ENCODE measurements at regions of chr12 and their contacts with region 1.

Region 1: DNA sequence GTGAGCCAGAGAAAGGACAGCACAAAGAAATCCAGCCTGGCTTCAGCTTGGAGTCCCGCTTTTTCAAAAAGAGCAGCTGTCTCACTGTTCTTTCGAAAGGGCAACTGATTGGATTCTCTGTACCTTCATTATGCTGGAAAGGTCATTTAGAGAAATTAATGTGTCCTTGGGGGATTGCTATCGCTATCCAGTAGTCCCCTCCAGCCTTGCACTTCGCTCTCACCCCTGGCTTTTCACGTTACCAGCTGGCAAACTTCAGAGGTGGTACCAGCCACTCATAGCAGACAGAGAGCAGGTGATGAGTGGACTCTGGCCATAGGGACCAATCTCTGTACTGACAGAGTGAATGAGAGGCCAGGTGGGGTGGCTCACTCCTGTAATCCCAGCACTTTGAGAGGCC is 11.8 kb upstream of the NUAK1 start:
- DNase-seq: no peak
- H3K4me3 ChIP-seq: no peak overlapping the region
- H3K27ac ChIP-seq: no peak overlapping the region
- H3K4me1 ChIP-seq: peaks cover 0 to 21% (median 14%) of the 10 kb centered on the region in 4 donors
- H3K27me3 ChIP-seq: no peaks in the 10 kb centered on the region
- CTCF ChIP-seq: no peak

Region 2: DNA sequence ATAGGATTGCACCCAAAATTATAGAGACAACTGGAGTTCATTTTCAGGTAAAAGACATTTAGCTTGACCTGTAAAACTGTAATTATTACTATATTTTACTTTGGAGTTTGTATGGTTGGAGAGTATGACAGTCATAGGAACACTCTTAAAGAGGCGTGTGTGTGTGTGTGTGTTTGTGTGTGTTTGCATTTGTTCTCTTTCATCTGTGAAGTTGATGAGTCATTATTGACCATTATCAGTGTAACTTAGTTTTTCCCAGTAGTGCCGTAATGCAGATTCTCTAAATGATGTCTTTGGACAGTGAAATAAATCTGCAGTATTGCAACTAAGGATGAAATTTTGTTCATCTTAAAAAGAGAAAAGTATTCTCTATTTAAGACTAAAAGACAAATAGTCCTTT is 1030.0 kb before region 1 on chr12:
- intact Hi-C with region 1: no loop called
- DNase-seq: no peak
- H3K4me3 ChIP-seq: no peak overlapping the region
- H3K27ac ChIP-seq: no peak overlapping the region
- H3K4me1 ChIP-seq: no peaks in the 10 kb centered on the region
- H3K27me3 ChIP-seq: no peaks in the 10 kb centered on the region
- CTCF ChIP-seq: no peak

Region 3: GRCh38 chr12:105420659-105421240 is 729.8 kb before region 1 on chr12:
- intact Hi-C with region 1: loop called (anchors 5 kb)
- DNase-seq: peak; percentile 70 to 82
- H3K4me3 ChIP-seq: no peak overlapping the region
- H3K27ac ChIP-seq: no peak overlapping the region
- H3K4me1 ChIP-seq: peaks cover 0 to 17% (median 8%) of the 10 kb centered on the region in 4 donors
- H3K27me3 ChIP-seq: no peaks in the 10 kb centered on the region
- CTCF ChIP-seq: peak; percentile 86 to 95

Region 4: DNA sequence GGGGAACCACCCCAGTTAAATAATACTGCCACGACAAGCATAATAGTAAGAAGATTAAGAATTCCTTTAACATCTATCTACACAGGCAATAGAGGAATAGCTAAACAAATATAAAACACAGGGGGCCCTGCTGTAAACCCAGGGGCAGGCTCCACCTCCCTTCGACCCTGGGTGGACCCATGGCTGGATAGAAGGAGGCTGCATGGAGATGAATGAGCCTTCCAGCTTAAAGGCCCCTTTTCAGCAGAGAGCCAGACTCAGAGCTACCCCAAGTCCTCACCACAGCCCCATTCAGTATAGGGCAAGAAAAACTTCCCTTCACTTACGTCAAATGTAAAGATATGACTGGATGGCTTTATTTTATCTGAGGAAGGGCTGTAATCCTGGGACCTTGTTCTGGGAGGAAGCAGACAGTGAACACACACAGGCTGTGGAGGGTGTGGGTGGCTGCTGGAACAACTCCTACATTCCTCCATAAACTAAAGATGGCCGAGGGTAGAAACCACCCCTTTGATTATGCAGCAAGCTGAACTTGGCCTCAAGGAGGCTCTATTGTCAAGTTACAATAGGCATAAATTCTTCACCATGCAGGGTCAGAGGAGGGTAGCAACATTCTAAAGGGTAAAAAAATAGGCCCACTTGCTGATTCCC is 42.2 kb before region 1 on chr12:
- intact Hi-C with region 1: no loop called
- DNase-seq: no peak
- H3K4me3 ChIP-seq: no peak overlapping the region
- H3K27ac ChIP-seq: peak overlapping the region; percentile 82 to 87
- H3K4me1 ChIP-seq: peaks cover 13 to 100% (median 78%) of the 10 kb centered on the region in 4 donors
- H3K27me3 ChIP-seq: no peaks in the 10 kb centered on the region
- CTCF ChIP-seq: no peak

Region 5: DNA sequence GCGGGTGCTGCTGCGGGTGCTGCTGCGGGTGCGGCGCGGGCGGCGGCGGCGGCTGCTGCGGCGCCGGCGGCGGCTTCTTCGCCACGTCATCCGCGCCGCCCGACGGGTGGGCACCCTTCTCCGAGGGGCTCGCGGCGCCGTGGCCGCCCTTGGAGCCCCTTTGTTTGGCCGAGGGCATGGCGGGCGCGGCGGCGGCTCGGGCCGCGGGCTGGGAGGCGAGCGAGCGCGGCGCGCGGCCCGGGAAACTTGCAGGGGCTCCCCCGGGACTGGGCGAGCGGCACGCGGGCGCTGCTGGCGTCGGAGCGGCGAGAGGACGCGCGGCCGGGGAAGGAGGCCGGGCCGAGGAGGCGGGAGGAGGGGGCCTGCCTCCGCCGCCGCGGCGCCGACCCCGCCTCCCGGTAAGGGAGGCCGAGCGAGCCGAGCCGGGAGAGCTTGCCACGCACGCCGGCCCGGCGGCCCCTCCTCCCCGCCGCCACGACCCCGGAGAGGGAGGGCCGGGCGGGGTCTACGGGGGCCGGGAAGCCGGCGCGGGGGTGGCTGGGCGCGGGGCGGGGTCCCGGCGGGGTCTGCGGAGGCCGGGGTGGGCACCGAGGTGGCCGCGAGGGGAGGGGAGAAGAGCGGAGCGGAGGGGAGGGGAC is 97.2 kb after region 1 on chr12 and contains the start of gene CKAP4:
- intact Hi-C with region 1: no loop called
- DNase-seq: peak; percentile 71 to 92
- H3K4me3 ChIP-seq: peak within 1 kb of the TSS; percentile 94 to 96
- H3K27ac ChIP-seq: peak within 1 kb of the TSS; percentile 100
- H3K4me1 ChIP-seq: peaks cover 0 to 42% (median 28%) of the 10 kb centered on the region in 4 donors
- H3K27me3 ChIP-seq: no peaks in the 10 kb centered on the region
- CTCF ChIP-seq: peak in 1 of 2 experiments; percentile 11